ENCODE measurements at regions of chr4 and their contacts with region 1.

Region 1: GRCh38 chr4:8090312-8090711 is 68.3 kb downstream of the ABLIM2 start:
- DNase-seq: peak; percentile 86
- H3K4me3 ChIP-seq: no peak overlapping the region
- H3K27ac ChIP-seq: no peak overlapping the region
- H3K4me1 ChIP-seq: peaks cover 6% of the 10 kb centered on the region
- H3K27me3 ChIP-seq: no peaks in the 10 kb centered on the region
- CTCF ChIP-seq: no peak
- POLR2A ChIP-seq: no peak

Region 2: GRCh38 chr4:7956311-7956808 is 134.0 kb before region 1 on chr4:
- CTCF ChIA-PET with region 1: no interaction called
- POLR2A ChIA-PET with region 1: no interaction called
- dilution Hi-C with region 1: no loop called
- intact Hi-C with region 1: no loop called
- DNase-seq: peak; percentile 91
- H3K4me3 ChIP-seq: no peak overlapping the region
- H3K27ac ChIP-seq: peak overlapping the region; percentile 93
- H3K4me1 ChIP-seq: peaks cover 38% of the 10 kb centered on the region
- H3K27me3 ChIP-seq: no peaks in the 10 kb centered on the region
- CTCF ChIP-seq: no peak
- POLR2A ChIP-seq: no peak

Region 3: GRCh38 chr4:8035371-8035780 is 54.9 kb before region 1 on chr4:
- CTCF ChIA-PET with region 1: no interaction called
- POLR2A ChIA-PET with region 1: no interaction called
- dilution Hi-C with region 1: no loop called
- intact Hi-C with region 1: loop called (anchors 10 kb)
- DNase-seq: peak; percentile 49
- H3K4me3 ChIP-seq: no peak overlapping the region
- H3K27ac ChIP-seq: no peak overlapping the region
- H3K4me1 ChIP-seq: peaks cover 3% of the 10 kb centered on the region
- H3K27me3 ChIP-seq: peaks cover 0 to 11% of the 10 kb centered on the region in 2 experiments
- CTCF ChIP-seq: no peak
- POLR2A ChIP-seq: no peak

Measured in endothelial cell of umbilical vein (primary cell).